Pancreas (tissue), 10 donors: ENCODE measurements at regions of chr6 and their contacts with region 1.

Region 1: DNA sequence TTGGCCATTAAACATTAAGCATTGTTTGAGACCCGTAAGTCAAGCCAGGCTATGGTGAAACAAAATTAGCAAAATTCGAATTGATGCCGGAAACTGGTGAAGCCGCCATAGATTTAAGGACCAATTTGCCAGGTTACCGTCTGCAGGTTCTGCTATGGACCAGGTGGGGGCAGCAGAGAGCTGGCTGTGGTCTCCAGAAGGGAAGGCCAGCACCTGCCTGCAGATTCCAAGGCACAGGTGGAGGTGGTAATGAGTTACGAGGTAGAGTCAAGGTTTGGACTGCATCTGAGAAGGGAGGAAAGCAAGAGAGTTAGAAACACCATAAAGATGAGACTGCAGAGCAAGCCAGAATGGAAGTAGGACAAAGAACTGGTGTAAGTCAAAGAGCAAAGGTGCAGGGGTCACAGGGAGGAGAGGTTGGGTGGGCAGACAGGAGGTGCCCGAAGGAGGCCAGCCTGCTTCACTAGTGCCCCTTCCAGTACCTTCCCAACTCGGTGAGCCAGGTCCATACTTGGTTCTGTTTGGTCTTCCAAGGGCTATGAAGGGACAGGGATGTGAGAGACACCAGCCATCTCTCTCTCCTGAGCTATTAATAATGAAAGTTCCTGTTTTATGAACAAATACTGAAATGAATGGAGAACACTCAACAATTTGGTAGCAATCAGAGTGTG is 131.6 kb upstream of the ESR1 start:
- DNase-seq: peak; percentile 32 to 74 (median 65)
- ATAC-seq: peak; percentile 89 to 99 (median 98)
- H3K4me3 ChIP-seq: no peak overlapping the region
- H3K27ac ChIP-seq: no peak overlapping the region
- H3K4me1 ChIP-seq: no peaks in the 10 kb centered on the region
- H3K27me3 ChIP-seq: no peaks in the 10 kb centered on the region
- CTCF ChIP-seq: peak; percentile 73 to 84 (median 81)

Region 2: GRCh38 chr6:151254451-151255081 is 421.3 kb before region 1 on chr6:
- intact Hi-C with region 1: no loop called
- DNase-seq: no peak
- ATAC-seq: peak; percentile 22 to 69 (median 53)
- H3K4me3 ChIP-seq: no peak overlapping the region
- H3K27ac ChIP-seq: peak overlapping the region in 2 of 4 donors; percentile 28 to 29
- H3K4me1 ChIP-seq: no peaks in the 10 kb centered on the region
- H3K27me3 ChIP-seq: no peaks in the 10 kb centered on the region
- CTCF ChIP-seq: no peak

Region 3: DNA sequence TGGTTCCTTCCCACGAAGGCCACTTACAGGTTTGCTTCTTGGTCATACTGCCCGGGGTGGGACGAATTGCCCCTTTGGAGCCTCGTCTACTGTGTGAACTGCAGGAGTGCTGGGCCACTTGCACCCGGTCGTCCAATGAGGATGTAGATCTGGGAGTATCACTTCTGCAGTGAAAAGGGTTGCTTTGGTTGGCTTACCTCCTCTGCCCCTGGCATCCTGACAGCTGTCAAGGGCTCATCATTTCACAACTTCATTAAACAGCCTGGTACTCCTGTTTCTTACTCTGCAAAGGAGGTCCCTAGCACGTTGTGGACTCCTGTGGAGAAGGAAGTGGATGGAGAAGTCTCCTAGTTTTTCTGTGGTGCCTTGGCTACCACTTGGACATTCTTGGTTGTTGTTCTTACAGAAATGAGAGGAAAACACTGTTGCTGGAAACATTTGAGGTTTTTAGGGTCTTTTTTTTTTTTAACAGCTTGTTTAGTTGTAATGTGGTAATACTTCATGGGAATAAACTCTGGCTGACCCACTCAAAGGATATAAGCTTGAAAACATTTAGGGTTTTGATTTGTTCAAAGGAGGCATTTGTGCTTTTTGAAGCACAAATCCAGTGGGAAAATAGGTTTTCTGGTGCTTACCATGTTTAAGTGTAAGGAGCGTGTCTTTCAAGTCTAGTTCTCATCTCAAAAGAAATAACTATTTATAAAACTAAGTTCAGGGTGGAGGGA is 375.5 kb before region 1 on chr6:
- intact Hi-C with region 1: no loop called
- DNase-seq: no peak
- ATAC-seq: no peak
- H3K4me3 ChIP-seq: no peak overlapping the region
- H3K27ac ChIP-seq: no peak overlapping the region
- H3K4me1 ChIP-seq: no peaks in the 10 kb centered on the region
- H3K27me3 ChIP-seq: no peaks in the 10 kb centered on the region
- CTCF ChIP-seq: no peak

Region 4: DNA sequence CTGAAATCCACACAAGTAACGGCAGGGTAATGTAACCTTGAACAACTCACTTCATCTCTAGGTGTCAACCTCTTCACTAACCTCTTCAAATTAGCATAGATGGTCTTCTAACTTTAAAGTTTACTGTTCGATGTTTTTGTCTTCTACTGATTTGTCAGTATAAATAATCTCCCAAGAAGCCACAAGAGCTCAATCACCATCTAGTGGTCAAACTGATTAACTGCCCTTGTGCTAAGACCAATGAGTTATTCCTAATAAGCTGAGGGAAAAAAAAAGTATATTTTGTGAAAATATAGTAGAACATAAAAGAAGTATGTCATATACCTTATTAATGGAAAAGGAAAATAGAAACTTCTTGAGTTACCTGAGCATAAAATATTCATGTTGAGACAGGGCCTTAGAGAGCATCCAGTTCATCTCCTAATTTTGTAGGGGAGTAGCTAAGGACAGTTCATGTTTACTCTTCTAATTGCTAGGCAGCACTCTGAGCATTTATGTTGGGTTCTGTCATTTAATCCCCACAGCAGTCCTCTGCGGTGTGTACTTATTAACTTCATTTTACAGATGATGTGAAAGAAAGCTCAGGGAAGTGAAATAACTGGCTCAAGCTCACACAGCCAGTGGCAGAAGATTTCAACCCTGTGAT is 448.7 kb after region 1 on chr6:
- intact Hi-C with region 1: loop called in 1 of 3 experiments (anchors 10 kb)
- DNase-seq: no peak
- ATAC-seq: peak in 3 of 4 donors; percentile 81 to 82 (median 82)
- H3K4me3 ChIP-seq: no peak overlapping the region
- H3K27ac ChIP-seq: no peak overlapping the region
- H3K4me1 ChIP-seq: no peaks in the 10 kb centered on the region
- H3K27me3 ChIP-seq: no peaks in the 10 kb centered on the region
- CTCF ChIP-seq: peak; percentile 20 to 53 (median 49)